A549 (cell line): ENCODE measurements at regions of chr5 and their contacts with region 1.

Region 1: DNA sequence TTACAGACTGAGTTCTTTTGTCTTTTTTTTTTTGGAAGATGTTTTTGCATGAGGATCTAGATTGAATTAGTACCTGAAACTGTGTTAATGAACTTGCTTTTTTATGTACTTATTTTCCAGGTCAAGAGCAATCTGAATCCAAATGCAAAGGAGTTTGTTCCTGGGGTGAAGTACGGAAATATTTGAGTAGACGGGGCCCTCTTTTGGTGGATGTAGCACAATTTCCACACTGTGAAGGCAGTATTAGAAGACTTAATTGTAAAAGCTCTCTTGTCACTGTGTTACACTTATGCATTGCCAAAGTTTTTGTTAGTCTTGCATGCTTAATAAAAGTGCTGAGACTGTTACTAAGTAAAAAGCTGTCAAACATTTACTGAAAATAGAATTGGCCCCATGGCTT is 14.5 kb downstream of the SLC23A1 start:
- DNase-seq: no peak
- ATAC-seq: peak in 1 of 2 experiments; percentile 33; a peak in 1 of 6 replicates
- H3K4me3 ChIP-seq: no peak overlapping the region
- H3K27ac ChIP-seq: no peak overlapping the region
- H3K4me1 ChIP-seq: peaks cover 16% of the 10 kb centered on the region
- CTCF ChIP-seq: peak; percentile 25; the same call in 1 of the 3 replicates
- EP300 ChIP-seq: no peak
- POLR2A ChIP-seq: no peak
- RAD21 ChIP-seq: peak; percentile 41 to 50; a peak in 3 of 5 replicates

Region 2: GRCh38 chr5:139358064-139358463 is 10.5 kb before region 1 on chr5:
- CTCF ChIA-PET with region 1: interaction called, 13 read pairs
- POLR2A ChIA-PET with region 1: no interaction called
- DNase-seq: no peak
- ATAC-seq: no peak
- H3K4me3 ChIP-seq: no peak overlapping the region
- H3K27ac ChIP-seq: no peak overlapping the region
- H3K4me1 ChIP-seq: peaks cover 3% of the 10 kb centered on the region; the same call in 1 of the 3 replicates
- CTCF ChIP-seq: no peak
- EP300 ChIP-seq: no peak
- POLR2A ChIP-seq: no peak
- RAD21 ChIP-seq: no peak